ENCODE measurements at regions of chr10 and their contacts with region 1.

Region 1: GRCh38 chr10:132446661-132447194 is 49.7 kb downstream of the PWWP2B start:
- DNase-seq: peak; percentile 65 to 71 (median 66)
- H3K4me3 ChIP-seq: peak overlapping the region in 2 of 3 experiments; percentile 7 to 63
- H3K4me3 Mint-ChIP-seq: peak overlapping the region; percentile 16 to 47
- H3K27ac ChIP-seq: peak overlapping the region; percentile 79 to 87
- H3K27ac Mint-ChIP-seq: peak overlapping the region; percentile 88 to 96 (median 92)
- H3K4me1 ChIP-seq: peaks cover 78 to 83% of the 10 kb centered on the region in 2 donors
- H3K4me1 Mint-ChIP-seq: peaks cover 64% of the 10 kb centered on the region
- H3K27me3 ChIP-seq: no peaks in the 10 kb centered on the region
- H3K27me3 Mint-ChIP-seq: peaks cover 0 to 2% (median 2%) of the 10 kb centered on the region in 3 donors
- CTCF ChIP-seq: peak; percentile 74

Region 2: DNA sequence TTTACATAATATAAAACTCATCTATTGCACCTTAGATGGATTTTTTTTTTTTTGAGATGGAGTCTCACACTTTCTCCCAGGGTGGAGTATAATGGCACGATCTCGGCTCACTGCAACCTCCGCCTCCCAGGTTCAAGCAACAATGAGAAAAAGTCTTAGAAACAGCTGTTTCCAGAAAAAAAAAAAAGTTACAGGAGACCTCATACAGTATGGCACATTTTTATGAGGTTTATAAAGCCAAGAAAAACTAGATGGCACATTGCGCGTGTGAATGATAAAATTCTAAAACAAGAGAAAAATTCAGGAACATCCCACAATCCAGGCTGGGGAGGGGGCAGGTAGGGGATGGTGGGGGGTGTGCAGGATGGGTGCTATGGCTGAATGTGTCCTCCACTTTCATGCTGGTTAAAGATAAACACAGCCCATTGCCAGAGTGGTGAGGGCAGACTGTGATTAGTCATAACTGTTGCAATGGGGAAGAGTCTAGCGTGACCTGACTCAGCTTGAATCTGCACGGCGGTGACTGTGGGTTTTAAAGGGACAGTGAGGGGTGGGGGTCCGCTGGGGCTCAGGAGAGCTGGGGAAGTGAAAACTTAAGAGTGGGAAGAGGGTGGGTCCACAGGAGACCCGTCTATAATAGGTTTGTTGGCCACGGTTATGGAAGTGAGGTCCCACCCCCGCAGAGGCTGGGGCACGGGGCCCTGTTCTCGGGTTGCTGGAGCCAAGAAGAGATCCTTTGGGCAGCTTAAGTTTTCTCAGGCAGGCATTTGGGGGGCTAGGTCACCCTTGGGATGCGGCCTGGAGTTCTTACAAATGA is 126.7 kb before region 1 on chr10:
- intact Hi-C with region 1: no loop called
- DNase-seq: peak; percentile 75 to 92 (median 89)
- H3K4me3 ChIP-seq: peak overlapping the region in 1 of 3 experiments; percentile 55
- H3K4me3 Mint-ChIP-seq: peak overlapping the region; percentile 67 to 90
- H3K27ac ChIP-seq: peak overlapping the region; percentile 10 to 79
- H3K27ac Mint-ChIP-seq: peak overlapping the region; percentile 86 to 93 (median 90)
- H3K4me1 ChIP-seq: peaks cover 36 to 42% of the 10 kb centered on the region in 2 donors
- H3K4me1 Mint-ChIP-seq: peaks cover 46% of the 10 kb centered on the region
- H3K27me3 ChIP-seq: no peaks in the 10 kb centered on the region
- H3K27me3 Mint-ChIP-seq: peaks cover 0 to 2% (median 0%) of the 10 kb centered on the region in 3 donors
- CTCF ChIP-seq: no peak

Region 3: GRCh38 chr10:132396495-132397035 is 50.2 kb before region 1 on chr10:
- intact Hi-C with region 1: loop called in 1 of 2 experiments (anchors 5 kb)
- DNase-seq: peak in 2 of 3 donors; percentile 62 to 67
- H3K4me3 ChIP-seq: peak overlapping the region; percentile 38 to 76 (median 55)
- H3K4me3 Mint-ChIP-seq: no peak overlapping the region
- H3K27ac ChIP-seq: peak overlapping the region; percentile 56 to 76
- H3K27ac Mint-ChIP-seq: peak overlapping the region in 1 of 7 donors; percentile 36
- H3K4me1 ChIP-seq: peaks cover 61 to 74% of the 10 kb centered on the region in 2 donors
- H3K4me1 Mint-ChIP-seq: peaks cover 58% of the 10 kb centered on the region
- H3K27me3 ChIP-seq: no peaks in the 10 kb centered on the region
- H3K27me3 Mint-ChIP-seq: peaks cover 5 to 10% (median 7%) of the 10 kb centered on the region in 3 donors
- CTCF ChIP-seq: peak; percentile 33

Region 4: GRCh38 chr10:132411561-132412253 is 35.0 kb before region 1 on chr10:
- intact Hi-C with region 1: loop called in 1 of 2 experiments (anchors 5 kb)
- DNase-seq: no peak
- H3K4me3 ChIP-seq: peak overlapping the region in 1 of 3 experiments; percentile 24
- H3K4me3 Mint-ChIP-seq: peak overlapping the region; percentile 43 to 77
- H3K27ac ChIP-seq: peak overlapping the region; percentile 44 to 53
- H3K27ac Mint-ChIP-seq: peak overlapping the region in 6 of 7 donors; percentile 40 to 80 (median 53)
- H3K4me1 ChIP-seq: peaks cover 72 to 79% of the 10 kb centered on the region in 2 donors
- H3K4me1 Mint-ChIP-seq: peaks cover 66% of the 10 kb centered on the region
- H3K27me3 ChIP-seq: no peaks in the 10 kb centered on the region
- H3K27me3 Mint-ChIP-seq: peaks cover 0 to 4% (median 0%) of the 10 kb centered on the region in 3 donors
- CTCF ChIP-seq: no peak

Region 5: DNA sequence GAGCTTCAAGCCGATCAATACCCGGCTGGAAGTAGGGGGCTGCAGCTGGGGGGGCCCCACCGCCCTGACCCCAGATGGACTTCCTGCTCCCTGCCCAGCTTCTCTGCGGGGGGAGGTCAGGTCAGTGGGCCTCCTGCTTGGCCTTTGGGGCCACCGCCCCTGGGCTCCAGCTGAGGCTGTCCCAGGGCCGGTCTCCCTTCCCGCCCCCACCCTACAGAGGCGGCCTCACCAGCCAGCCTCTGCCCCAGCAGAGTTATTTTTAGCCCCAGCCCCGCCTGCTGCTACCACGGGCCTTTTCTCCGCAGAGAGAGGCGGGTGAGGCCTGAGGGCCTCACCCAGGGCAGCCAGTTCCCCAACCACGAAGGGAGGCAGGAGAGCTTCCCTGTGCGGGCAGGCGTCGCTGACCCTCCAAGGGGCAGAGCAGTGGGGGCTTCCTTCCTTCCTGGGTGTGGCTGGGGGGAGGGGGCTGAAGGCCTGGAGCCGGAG is 25.3 kb before region 1 on chr10:
- intact Hi-C with region 1: loop called in 1 of 2 experiments (anchors 2 kb)
- DNase-seq: peak; percentile 65 to 80 (median 71)
- H3K4me3 ChIP-seq: peak overlapping the region; percentile 2 to 70 (median 17)
- H3K4me3 Mint-ChIP-seq: peak overlapping the region; percentile 62 to 70
- H3K27ac ChIP-seq: peak overlapping the region; percentile 91 to 96
- H3K27ac Mint-ChIP-seq: peak overlapping the region; percentile 91 to 99 (median 95)
- H3K4me1 ChIP-seq: peaks cover 74 to 76% of the 10 kb centered on the region in 2 donors
- H3K4me1 Mint-ChIP-seq: peaks cover 63% of the 10 kb centered on the region
- H3K27me3 ChIP-seq: no peaks in the 10 kb centered on the region
- H3K27me3 Mint-ChIP-seq: no peaks in the 10 kb centered on the region
- CTCF ChIP-seq: no peak